Endothelial cell of umbilical vein (primary cell): ENCODE measurements at regions of chr10 and their contacts with region 1.

Region 1: GRCh38 chr10:93503075-93503474 is 6.7 kb downstream of the CEP55 start:
- DNase-seq: no peak
- H3K4me3 ChIP-seq: no peak overlapping the region
- H3K27ac ChIP-seq: no peak overlapping the region
- H3K4me1 ChIP-seq: peaks cover 9% of the 10 kb centered on the region
- H3K27me3 ChIP-seq: no peaks in the 10 kb centered on the region
- CTCF ChIP-seq: no peak
- POLR2A ChIP-seq: no peak

Region 2: DNA sequence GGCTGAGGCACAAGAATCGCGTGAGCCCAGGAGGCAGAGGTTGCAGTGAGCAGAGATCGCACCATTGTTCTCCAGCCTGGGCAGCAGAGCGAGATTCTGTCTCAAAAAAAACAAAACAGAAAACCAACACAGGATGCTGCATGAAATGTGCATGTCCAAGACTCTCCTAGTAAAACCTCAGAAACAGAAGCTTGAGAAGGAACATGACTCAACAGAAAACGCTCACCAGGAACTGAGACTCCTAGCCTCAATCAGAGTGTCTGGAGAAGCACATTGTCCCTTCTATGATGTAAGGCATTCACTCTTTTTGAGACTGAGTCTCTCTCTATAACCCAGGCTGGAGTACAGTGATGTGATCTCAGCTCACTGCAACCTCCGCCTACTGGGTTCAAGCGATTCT is 189.3 kb before region 1 on chr10:
- CTCF ChIA-PET with region 1: no interaction called
- POLR2A ChIA-PET with region 1: no interaction called
- dilution Hi-C with region 1: no loop called
- intact Hi-C with region 1: loop called (anchors 5 kb)
- DNase-seq: peak; percentile 17
- H3K4me3 ChIP-seq: no peak overlapping the region
- H3K27ac ChIP-seq: no peak overlapping the region
- H3K4me1 ChIP-seq: no peaks in the 10 kb centered on the region
- H3K27me3 ChIP-seq: no peaks in the 10 kb centered on the region
- CTCF ChIP-seq: no peak
- POLR2A ChIP-seq: no peak

Region 3: GRCh38 chr10:93652857-93653256 is 149.8 kb after region 1 on chr10:
- CTCF ChIA-PET with region 1: no interaction called
- POLR2A ChIA-PET with region 1: no interaction called
- dilution Hi-C with region 1: no loop called
- intact Hi-C with region 1: no loop called
- DNase-seq: peak; percentile 41
- H3K4me3 ChIP-seq: no peak overlapping the region
- H3K27ac ChIP-seq: no peak overlapping the region
- H3K4me1 ChIP-seq: peaks cover 4% of the 10 kb centered on the region
- H3K27me3 ChIP-seq: no peaks in the 10 kb centered on the region
- CTCF ChIP-seq: no peak
- POLR2A ChIP-seq: no peak